Activated naive CD4-positive, alpha-beta T cell treated with anti-CD3 and anti-CD28 coated beads for 36 hours (primary cell): ENCODE measurements at regions of chr3 and their contacts with region 1.

Region 1: DNA sequence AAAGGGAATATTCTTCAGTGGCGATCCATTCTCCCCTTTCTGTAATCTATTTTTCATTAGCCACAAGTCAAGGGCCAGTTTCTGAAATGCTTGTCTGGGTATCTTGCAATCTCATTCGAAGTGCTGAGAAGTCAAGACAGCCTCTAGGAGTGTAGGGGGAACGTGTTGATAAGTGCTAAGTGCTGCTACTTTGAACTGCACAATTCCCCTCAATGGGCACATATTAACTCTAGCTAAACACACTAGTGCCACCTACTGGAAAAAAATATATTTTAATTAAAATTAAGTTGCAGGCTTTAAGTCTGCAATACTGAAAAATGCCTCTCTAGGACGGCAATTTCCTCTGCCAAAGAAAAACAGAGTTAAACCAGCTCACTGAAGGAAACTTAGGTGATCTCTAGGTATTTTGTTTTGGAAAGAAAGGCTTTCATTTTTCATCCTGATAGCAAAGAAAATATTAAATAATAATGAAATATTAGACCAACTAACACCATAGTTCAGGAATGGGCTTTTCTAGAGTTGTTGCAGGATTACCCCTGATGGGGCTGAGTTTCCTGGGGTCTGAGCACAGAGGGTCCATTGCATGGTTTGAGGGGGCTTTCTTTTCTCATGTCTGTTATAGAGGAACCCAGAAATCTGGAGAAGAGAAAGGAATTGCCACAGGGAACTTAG is 181.9 kb upstream of the KBTBD8 start:
- DNase-seq: peak; percentile 12
- H3K4me3 Mint-ChIP-seq: no peak overlapping the region
- H3K27ac Mint-ChIP-seq: no peak overlapping the region
- H3K4me1 Mint-ChIP-seq: no peaks in the 10 kb centered on the region
- H3K27me3 Mint-ChIP-seq: no peaks in the 10 kb centered on the region

Region 2: GRCh38 chr3:65230256-65231139 is 1585.7 kb before region 1 on chr3:
- CTCF ChIA-PET with region 1: no interaction called
- intact Hi-C with region 1: no loop called
- DNase-seq: no peak
- H3K4me3 Mint-ChIP-seq: no peak overlapping the region
- H3K27ac Mint-ChIP-seq: no peak overlapping the region
- H3K4me1 Mint-ChIP-seq: no peaks in the 10 kb centered on the region
- H3K27me3 Mint-ChIP-seq: no peaks in the 10 kb centered on the region

Region 3: DNA sequence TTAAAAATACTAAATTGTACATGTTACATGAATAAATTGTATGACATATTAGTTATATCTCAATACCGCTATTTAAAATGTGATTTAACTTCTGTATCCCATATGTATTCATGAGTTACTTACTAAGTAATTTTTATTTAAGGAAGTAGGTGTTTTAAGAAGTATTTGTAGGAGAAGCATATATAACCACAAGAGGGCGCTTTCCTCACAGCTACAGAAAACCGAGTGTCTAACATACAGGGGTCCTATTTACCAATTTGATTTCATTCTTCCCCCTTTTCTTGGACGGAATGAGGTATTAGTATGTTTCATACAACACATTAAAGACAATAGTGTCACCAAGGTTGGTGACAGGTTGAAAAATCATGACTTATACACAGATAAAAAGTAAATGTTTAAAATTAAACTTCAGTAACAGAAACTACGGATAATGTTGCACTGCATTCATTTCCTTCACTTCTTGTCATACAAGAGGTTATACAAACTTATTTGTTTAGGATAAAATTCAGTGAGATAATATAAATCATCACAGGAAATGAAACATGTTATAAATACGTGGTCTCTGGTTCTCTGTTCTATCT is 1031.1 kb before region 1 on chr3:
- CTCF ChIA-PET with region 1: no interaction called
- intact Hi-C with region 1: loop called (anchors 10 kb)
- DNase-seq: no peak
- H3K4me3 Mint-ChIP-seq: no peak overlapping the region
- H3K27ac Mint-ChIP-seq: no peak overlapping the region
- H3K4me1 Mint-ChIP-seq: no peaks in the 10 kb centered on the region
- H3K27me3 Mint-ChIP-seq: peaks cover 6% of the 10 kb centered on the region

Region 4: GRCh38 chr3:65953301-65953812 is 862.9 kb before region 1 on chr3:
- CTCF ChIA-PET with region 1: no interaction called
- intact Hi-C with region 1: no loop called
- DNase-seq: no peak
- H3K4me3 Mint-ChIP-seq: no peak overlapping the region
- H3K27ac Mint-ChIP-seq: no peak overlapping the region
- H3K4me1 Mint-ChIP-seq: no peaks in the 10 kb centered on the region
- H3K27me3 Mint-ChIP-seq: peaks cover 9% of the 10 kb centered on the region

Region 5: GRCh38 chr3:66253790-66254620 is 562.2 kb before region 1 on chr3:
- CTCF ChIA-PET with region 1: interaction called, 11 read pairs
- intact Hi-C with region 1: loop called (anchors 1 kb)
- DNase-seq: no peak
- H3K4me3 Mint-ChIP-seq: no peak overlapping the region
- H3K27ac Mint-ChIP-seq: no peak overlapping the region
- H3K4me1 Mint-ChIP-seq: no peaks in the 10 kb centered on the region
- H3K27me3 Mint-ChIP-seq: no peaks in the 10 kb centered on the region

Region 6: DNA sequence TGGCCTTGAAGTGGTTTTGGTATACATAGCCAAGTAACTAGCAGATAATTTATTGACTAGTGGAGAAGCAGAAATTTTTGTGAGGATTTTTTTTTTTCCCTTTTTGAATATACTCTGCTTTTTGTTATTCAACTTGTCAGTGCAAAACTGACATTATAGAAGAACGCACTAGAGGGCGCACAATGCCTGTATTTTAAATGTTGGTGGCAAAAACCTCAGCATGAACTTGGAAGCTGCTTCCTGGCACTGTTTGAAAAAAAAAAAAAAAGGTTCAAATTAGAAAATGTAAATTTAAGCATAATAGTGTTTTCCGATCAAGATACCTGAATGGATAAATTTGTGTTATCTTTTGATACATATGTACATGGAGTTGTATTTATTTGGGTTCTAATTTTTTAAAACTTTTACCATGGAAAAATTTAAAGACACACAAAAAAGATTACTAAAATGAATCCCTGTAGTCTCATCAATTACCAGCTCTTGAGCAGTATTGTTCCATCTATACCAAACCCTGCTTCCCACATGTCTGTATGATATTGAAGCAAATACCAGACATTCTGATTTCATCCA is 539.4 kb before region 1 on chr3:
- CTCF ChIA-PET with region 1: interaction called, 10 read pairs
- intact Hi-C with region 1: loop called (anchors 1 kb)
- DNase-seq: peak; percentile 84
- H3K4me3 Mint-ChIP-seq: no peak overlapping the region
- H3K27ac Mint-ChIP-seq: no peak overlapping the region
- H3K4me1 Mint-ChIP-seq: peaks cover 24% of the 10 kb centered on the region
- H3K27me3 Mint-ChIP-seq: no peaks in the 10 kb centered on the region

Region 7: GRCh38 chr3:66394019-66394752 is 422.0 kb before region 1 on chr3:
- CTCF ChIA-PET with region 1: no interaction called
- intact Hi-C with region 1: loop called (anchors 5 kb)
- DNase-seq: peak; percentile 75
- H3K4me3 Mint-ChIP-seq: peak overlapping the region; percentile 73
- H3K27ac Mint-ChIP-seq: peak overlapping the region; percentile 82
- H3K4me1 Mint-ChIP-seq: peaks cover 48% of the 10 kb centered on the region
- H3K27me3 Mint-ChIP-seq: no peaks in the 10 kb centered on the region

Region 8: DNA sequence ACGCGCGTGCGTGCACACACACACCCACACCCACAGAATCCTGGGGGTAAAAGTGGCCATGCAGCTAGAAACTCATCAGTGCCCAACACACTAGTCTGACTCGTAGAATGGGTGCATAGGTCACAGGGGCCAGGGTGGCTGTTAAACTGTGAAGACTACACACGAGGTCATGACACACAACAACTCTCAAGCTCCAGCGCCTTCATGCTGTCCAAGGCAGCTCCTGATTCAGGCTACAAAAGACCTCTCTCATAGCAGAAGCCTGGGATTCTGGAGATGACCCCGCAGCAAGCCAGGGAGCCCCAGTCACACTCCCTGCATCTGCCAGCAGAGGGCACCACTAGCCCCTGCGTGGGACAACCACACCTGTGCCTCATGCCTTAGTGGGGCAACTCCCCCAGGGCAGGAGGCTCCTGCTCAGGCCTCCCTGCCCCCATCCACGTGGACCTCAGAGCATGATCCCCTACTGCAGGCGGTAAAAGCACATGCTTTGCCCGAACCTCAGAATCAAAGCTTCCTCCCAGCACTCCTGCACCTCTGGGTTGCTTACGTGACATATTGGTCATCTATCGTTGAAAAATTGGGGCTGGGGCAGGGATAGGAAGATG is 408.5 kb before region 1 on chr3:
- CTCF ChIA-PET with region 1: interaction called, 21 read pairs
- intact Hi-C with region 1: loop called (anchors 1 kb)
- DNase-seq: peak; percentile 81
- H3K4me3 Mint-ChIP-seq: no peak overlapping the region
- H3K27ac Mint-ChIP-seq: no peak overlapping the region
- H3K4me1 Mint-ChIP-seq: peaks cover 3% of the 10 kb centered on the region
- H3K27me3 Mint-ChIP-seq: no peaks in the 10 kb centered on the region

Region 9: DNA sequence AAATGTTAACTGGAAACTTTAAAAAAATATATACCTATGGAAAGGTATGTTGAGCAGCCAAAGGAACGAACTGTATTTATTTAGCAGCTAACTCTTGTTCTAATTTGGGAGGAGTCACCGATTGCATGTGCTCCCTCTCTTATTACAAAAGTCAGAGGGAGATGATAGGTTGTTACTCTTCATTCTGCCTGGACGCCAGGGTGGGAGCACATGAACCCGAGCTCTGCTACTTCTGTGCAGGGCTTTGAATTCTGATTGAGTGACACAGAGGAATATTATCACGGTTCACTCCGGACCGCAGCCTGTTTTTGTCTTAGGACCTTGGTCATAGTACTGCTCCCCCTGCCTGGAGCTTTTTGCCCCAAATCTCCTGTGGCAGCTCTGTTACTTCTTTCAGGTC is 278.5 kb before region 1 on chr3:
- CTCF ChIA-PET with region 1: no interaction called
- intact Hi-C with region 1: no loop called
- DNase-seq: no peak
- H3K4me3 Mint-ChIP-seq: no peak overlapping the region
- H3K27ac Mint-ChIP-seq: no peak overlapping the region
- H3K4me1 Mint-ChIP-seq: no peaks in the 10 kb centered on the region
- H3K27me3 Mint-ChIP-seq: no peaks in the 10 kb centered on the region

Region 10: GRCh38 chr3:66803206-66803605 is 13.0 kb before region 1 on chr3:
- CTCF ChIA-PET with region 1: interaction called, 16 read pairs
- intact Hi-C with region 1: no loop called
- DNase-seq: no peak
- H3K4me3 Mint-ChIP-seq: no peak overlapping the region
- H3K27ac Mint-ChIP-seq: no peak overlapping the region
- H3K4me1 Mint-ChIP-seq: no peaks in the 10 kb centered on the region
- H3K27me3 Mint-ChIP-seq: peaks cover 14% of the 10 kb centered on the region